Activated CD4-positive, alpha-beta memory T cell treated with anti-CD3 and anti-CD28 coated beads for 36 hours (primary cell): ENCODE measurements at regions of chr21 and their contacts with region 1.

Region 1: DNA sequence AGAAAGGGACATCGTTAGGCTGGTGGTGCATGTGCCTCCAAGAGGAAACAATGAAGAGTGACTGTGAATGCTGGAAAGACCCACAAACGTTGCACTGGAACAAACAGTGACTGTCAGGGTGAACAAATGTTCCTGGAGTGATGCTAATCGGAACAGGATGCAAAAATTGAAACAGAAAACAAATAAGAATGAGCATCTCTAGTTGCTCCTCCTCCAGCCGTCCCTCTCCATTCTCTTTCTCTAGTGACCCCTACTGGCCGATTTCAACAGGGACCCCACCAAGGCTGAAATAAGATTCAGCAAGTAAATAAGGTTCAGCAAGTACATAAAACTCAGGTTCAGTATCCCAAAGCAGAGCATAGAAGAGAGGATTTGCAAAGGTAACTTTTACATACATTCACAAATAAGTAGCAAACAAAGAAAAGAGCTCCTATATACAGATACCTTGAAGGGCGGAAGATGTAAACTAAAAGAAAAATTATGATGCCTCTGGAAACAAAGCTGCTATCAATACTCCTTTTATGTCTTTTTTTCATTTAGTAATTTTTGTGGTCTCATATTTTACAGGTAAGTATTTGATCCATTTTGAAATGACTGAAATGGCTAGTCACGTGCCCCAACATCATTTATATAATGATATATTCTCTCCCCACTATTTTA is 836.1 kb upstream of the ADAMTS5 start:
- DNase-seq: peak; percentile 35
- H3K4me3 Mint-ChIP-seq: no peak overlapping the region
- H3K27ac Mint-ChIP-seq: no peak overlapping the region
- H3K4me1 Mint-ChIP-seq: no peaks in the 10 kb centered on the region
- H3K27me3 Mint-ChIP-seq: no peaks in the 10 kb centered on the region

Region 2: GRCh38 chr21:26850108-26850643 is 952.8 kb before region 1 on chr21:
- CTCF ChIA-PET with region 1: no interaction called
- POLR2A ChIA-PET with region 1: no interaction called
- intact Hi-C with region 1: loop called (anchors 2 kb)
- DNase-seq: no peak
- H3K4me3 Mint-ChIP-seq: no peak overlapping the region
- H3K27ac Mint-ChIP-seq: no peak overlapping the region
- H3K4me1 Mint-ChIP-seq: peaks cover 19% of the 10 kb centered on the region
- H3K27me3 Mint-ChIP-seq: peaks cover 37% of the 10 kb centered on the region

Region 3: DNA sequence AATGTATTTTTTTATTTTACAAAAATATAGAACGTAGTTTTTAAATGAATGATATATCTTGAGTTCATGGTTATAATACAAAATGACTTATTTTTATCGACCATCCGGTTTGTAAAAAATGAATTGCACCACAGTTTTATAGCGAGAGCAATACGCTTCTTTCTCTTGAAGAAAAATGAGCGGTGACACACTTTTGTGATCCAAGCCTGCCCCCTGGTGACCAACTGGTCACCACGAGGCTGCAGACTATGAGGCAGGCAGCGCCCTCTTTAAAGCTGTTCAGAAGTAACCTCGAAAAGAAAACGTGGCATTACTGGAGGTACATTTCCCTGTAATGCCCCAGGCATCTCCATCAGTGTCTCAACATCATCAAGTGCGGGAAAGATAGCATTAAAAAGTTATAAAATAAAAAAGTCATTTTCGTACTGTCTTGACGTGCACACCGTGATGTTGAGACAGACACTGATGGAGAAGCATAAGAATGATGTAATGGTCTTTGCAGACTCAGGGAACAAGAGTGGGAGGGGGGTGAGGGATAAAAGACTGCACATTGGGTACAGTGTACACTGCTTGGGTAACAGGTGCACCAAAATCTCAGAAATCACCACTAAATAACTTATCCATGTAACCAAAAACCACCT is 101.9 kb before region 1 on chr21:
- CTCF ChIA-PET with region 1: no interaction called
- POLR2A ChIA-PET with region 1: no interaction called
- intact Hi-C with region 1: loop called (anchors 5 kb)
- DNase-seq: peak; percentile 73
- H3K4me3 Mint-ChIP-seq: no peak overlapping the region
- H3K27ac Mint-ChIP-seq: no peak overlapping the region
- H3K4me1 Mint-ChIP-seq: no peaks in the 10 kb centered on the region
- H3K27me3 Mint-ChIP-seq: no peaks in the 10 kb centered on the region

Region 4: DNA sequence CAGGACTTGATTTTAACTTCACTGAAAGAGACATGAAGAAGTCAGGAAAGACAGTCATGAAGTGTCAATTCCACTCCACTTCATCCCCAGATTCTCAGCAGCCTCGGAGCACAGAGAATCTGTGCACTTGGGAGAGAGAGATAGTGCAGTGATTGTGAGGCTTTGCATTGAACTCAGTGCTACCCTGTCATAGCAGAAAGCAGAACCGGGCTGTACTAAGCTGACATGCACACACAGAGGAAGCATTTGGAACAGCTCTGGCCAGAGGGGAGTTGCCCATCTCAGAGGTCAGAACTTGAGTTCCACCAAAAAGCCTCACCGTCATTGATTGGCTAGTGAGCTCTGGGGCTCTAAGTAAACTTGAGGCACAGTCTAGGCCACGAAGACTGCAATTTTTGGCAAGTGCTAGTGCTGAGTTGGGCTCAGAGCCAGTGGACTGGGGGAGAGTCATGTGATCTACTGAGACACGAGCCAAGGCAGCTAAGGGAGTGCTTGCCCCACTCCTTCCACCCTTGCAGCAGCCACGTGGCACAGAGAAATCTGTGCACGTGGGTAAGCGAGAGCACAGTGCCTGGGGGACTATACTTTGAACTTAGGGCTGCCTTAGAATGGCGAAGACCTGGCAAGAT is 25.9 kb before region 1 on chr21:
- CTCF ChIA-PET with region 1: no interaction called
- POLR2A ChIA-PET with region 1: no interaction called
- intact Hi-C with region 1: loop called (anchors 1 kb)
- DNase-seq: no peak
- H3K4me3 Mint-ChIP-seq: no peak overlapping the region
- H3K27ac Mint-ChIP-seq: no peak overlapping the region
- H3K4me1 Mint-ChIP-seq: no peaks in the 10 kb centered on the region
- H3K27me3 Mint-ChIP-seq: no peaks in the 10 kb centered on the region